ENCODE measurements at regions of chr5 and their contacts with region 1.

Region 1: GRCh38 chr5:139968547-139969261 is 74.4 kb downstream of the NRG2 start:
- DNase-seq: peak; percentile 91

Region 2: GRCh38 chr5:139787568-139788293 is 181.0 kb before region 1 on chr5:
- CTCF ChIA-PET with region 1: interaction called, 98 read pairs
- POLR2A ChIA-PET with region 1: interaction called, 4 read pairs
- DNase-seq: peak; percentile 95

Region 3: GRCh38 chr5:139863855-139864558 is 104.7 kb before region 1 on chr5:
- CTCF ChIA-PET with region 1: interaction called, 10 read pairs
- POLR2A ChIA-PET with region 1: no interaction called
- DNase-seq: peak; percentile 82

Region 4: DNA sequence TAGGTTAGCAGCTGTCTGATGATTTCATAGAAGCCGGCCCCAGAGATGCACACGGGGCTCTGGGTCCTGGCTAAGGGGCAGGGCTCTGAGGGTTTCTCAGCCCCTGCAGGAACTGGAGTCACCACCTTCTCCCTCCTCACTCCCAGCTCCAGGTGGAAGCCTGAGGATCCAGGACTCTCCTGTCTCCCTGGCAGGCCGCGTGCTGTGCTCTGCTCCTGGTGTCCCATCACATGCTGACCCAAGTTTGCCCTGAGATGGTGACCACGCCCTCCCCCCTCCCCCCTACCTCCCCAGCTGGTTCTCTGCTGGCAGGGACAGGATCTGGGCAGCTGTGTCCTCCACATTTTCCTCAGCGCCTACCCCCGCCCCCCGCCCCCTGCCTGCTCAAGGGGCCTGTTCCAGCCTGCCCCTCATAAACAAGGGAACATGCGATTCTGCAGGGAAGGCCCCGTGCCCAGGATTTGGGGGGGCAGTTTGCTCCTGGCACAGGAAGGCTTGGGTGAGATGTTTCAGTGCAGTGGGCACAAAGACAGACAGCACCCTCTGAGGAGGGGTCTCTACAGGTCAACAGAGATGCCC is 85.7 kb before region 1 on chr5:
- CTCF ChIA-PET with region 1: interaction called, 28 read pairs
- POLR2A ChIA-PET with region 1: no interaction called
- DNase-seq: no peak

Region 5: GRCh38 chr5:139955053-139955605 is 13.6 kb before region 1 on chr5:
- CTCF ChIA-PET with region 1: interaction called, 23 read pairs
- POLR2A ChIA-PET with region 1: no interaction called
- DNase-seq: no peak

Region 6: GRCh38 chr5:140042643-140043500 is 74.2 kb after region 1 on chr5 and contains the start of gene NRG2:
- CTCF ChIA-PET with region 1: interaction called, 26 read pairs
- POLR2A ChIA-PET with region 1: no interaction called
- DNase-seq: peak; percentile 85

Region 7: GRCh38 chr5:140106101-140106500 is 137.4 kb after region 1 on chr5:
- CTCF ChIA-PET with region 1: no interaction called
- POLR2A ChIA-PET with region 1: no interaction called
- DNase-seq: no peak

Measured in HEK293T (cell line).